CD4-positive, alpha-beta T cell (primary cell): ENCODE measurements at regions of chrX and their contacts with region 1.

Region 1: GRCh38 chrX:15749642-15750610 is 11.9 kb downstream of the CA5B start:
- DNase-seq: peak in 6 of 14 experiments; percentile 12 to 65 (median 60)
- ATAC-seq: peak; percentile 57
- H3K4me3 ChIP-seq: peak overlapping the region; percentile 19
- H3K4me3 Mint-ChIP-seq: peak overlapping the region; percentile 64
- H3K27ac ChIP-seq: peak overlapping the region; percentile 82 to 98
- H3K27ac Mint-ChIP-seq: peak overlapping the region; percentile 91
- H3K4me1 ChIP-seq: peaks cover 60% of the 10 kb centered on the region
- H3K4me1 Mint-ChIP-seq: peaks cover 86% of the 10 kb centered on the region
- H3K27me3 ChIP-seq: no peaks in the 10 kb centered on the region
- H3K27me3 Mint-ChIP-seq: no peaks in the 10 kb centered on the region
- CTCF ChIP-seq: no peak

Region 2: GRCh38 chrX:15789979-15790768 is 40.2 kb after region 1 on chrX and contains the start of gene ZRSR2:
- CTCF ChIA-PET with region 1: no interaction called
- POLR2A ChIA-PET with region 1: interaction called, 10 read pairs
- intact Hi-C with region 1: loop called in 1 of 2 experiments (anchors 5 kb)
- DNase-seq: peak; percentile 72 to 94 (median 86)
- ATAC-seq: peak; percentile 90
- H3K4me3 ChIP-seq: peak within 1 kb of the TSS; percentile 86
- H3K4me3 Mint-ChIP-seq: no peak within 1 kb of the TSS
- H3K27ac ChIP-seq: peak within 1 kb of the TSS; percentile 87 to 92
- H3K27ac Mint-ChIP-seq: no peak within 1 kb of the TSS
- H3K4me1 ChIP-seq: peaks cover 27% of the 10 kb centered on the region
- H3K4me1 Mint-ChIP-seq: peaks cover 13% of the 10 kb centered on the region
- H3K27me3 ChIP-seq: no peaks in the 10 kb centered on the region
- H3K27me3 Mint-ChIP-seq: no peaks in the 10 kb centered on the region
- CTCF ChIP-seq: no peak
- total RNA-seq, gene ZRSR2: 18.4 to 21.1 TPM

Region 3: DNA sequence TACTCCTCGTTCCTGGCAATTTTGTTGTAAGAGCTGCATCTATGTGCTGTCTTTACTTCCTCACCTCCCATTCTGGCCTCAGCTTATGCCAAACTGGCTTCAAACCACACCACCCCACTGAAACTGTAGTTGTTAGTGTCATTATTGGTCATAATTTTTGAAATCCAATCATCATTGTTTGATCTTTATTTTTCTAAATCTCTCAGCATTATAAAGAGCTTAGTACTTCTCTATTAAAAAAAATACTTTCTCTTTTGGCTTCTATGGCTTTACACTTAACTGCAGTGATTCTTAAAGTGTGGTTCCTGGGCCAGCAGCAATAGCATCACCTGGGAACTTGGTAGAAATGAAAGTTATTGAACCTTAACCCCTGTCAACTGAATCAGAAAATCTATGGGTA is 289.9 kb after region 1 on chrX:
- CTCF ChIA-PET with region 1: no interaction called
- POLR2A ChIA-PET with region 1: no interaction called
- intact Hi-C with region 1: no loop called
- DNase-seq: no peak
- ATAC-seq: no peak
- H3K4me3 ChIP-seq: no peak overlapping the region
- H3K4me3 Mint-ChIP-seq: no peak overlapping the region
- H3K27ac ChIP-seq: no peak overlapping the region
- H3K27ac Mint-ChIP-seq: no peak overlapping the region
- H3K4me1 ChIP-seq: no peaks in the 10 kb centered on the region
- H3K4me1 Mint-ChIP-seq: no peaks in the 10 kb centered on the region
- H3K27me3 ChIP-seq: no peaks in the 10 kb centered on the region
- H3K27me3 Mint-ChIP-seq: no peaks in the 10 kb centered on the region
- CTCF ChIP-seq: no peak

Region 4: DNA sequence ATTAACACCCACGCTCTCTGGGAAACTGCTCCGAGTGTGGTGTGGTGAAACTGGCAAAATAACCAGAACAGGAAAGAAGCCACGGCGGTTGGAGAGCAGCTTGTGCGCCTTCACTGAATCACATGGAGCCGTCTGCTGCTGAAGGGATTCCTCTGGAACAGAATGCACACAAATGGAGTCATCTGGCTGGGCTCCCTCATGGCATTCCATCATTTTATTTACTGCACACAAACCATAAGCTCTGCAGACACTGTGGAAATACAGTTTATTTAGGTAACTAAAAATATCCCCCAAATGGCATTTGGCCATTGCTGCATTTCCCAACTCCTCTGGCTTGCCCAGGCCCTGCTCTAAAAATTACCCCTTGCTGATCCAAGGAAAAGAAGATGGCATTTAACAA is 713.0 kb after region 1 on chrX:
- CTCF ChIA-PET with region 1: no interaction called
- POLR2A ChIA-PET with region 1: no interaction called
- intact Hi-C with region 1: no loop called
- DNase-seq: no peak
- ATAC-seq: no peak
- H3K4me3 ChIP-seq: no peak overlapping the region
- H3K4me3 Mint-ChIP-seq: no peak overlapping the region
- H3K27ac ChIP-seq: no peak overlapping the region
- H3K27ac Mint-ChIP-seq: no peak overlapping the region
- H3K4me1 ChIP-seq: no peaks in the 10 kb centered on the region
- H3K4me1 Mint-ChIP-seq: no peaks in the 10 kb centered on the region
- H3K27me3 ChIP-seq: no peaks in the 10 kb centered on the region
- H3K27me3 Mint-ChIP-seq: no peaks in the 10 kb centered on the region
- CTCF ChIP-seq: no peak